K562 (cell line): ENCODE measurements at regions of chr6 and their contacts with region 1.

Region 1: GRCh38 chr6:10429638-10430427 is 15.0 kb upstream of the TFAP2A start:
- DNase-seq: peak; percentile 46 to 77 (median 59)
- ATAC-seq: peak; percentile 91
- H3K4me3 ChIP-seq: peak overlapping the region; percentile 4; the same call in 1 of the 2 replicates
- H3K27ac ChIP-seq: no peak overlapping the region; the same call in 2 of the 3 replicates
- H3K4me1 ChIP-seq: peaks cover 8 to 9% of the 10 kb centered on the region in 2 experiments; a peak in 4 of 5 replicates
- H3K27me3 ChIP-seq: peaks cover 0 to 9% of the 10 kb centered on the region in 2 experiments; a peak in 2 of 5 replicates
- CTCF ChIP-seq: peak; percentile 65 to 89 (median 79)
- EP300 ChIP-seq: peak; percentile 42; the same call in 1 of the 2 replicates
- POLR2A ChIP-seq: no peak
- RAD21 ChIP-seq: peak; percentile 98

Region 2: GRCh38 chr6:8435160-8435852 is 1994.5 kb before region 1 on chr6 and contains the start of gene SLC35B3:
- CTCF ChIA-PET with region 1: no interaction called
- POLR2A ChIA-PET with region 1: no interaction called
- in situ Hi-C with region 1: loop called (anchors 25 kb)
- intact Hi-C with region 1: loop called (anchors 10 kb)
- DNase-seq: peak; percentile 97 to 98 (median 98)
- ATAC-seq: peak; percentile 96
- H3K4me3 ChIP-seq: peak within 1 kb of the TSS; percentile 90
- H3K27ac ChIP-seq: peak within 1 kb of the TSS; percentile 91
- H3K4me1 ChIP-seq: peaks cover 5 to 9% of the 10 kb centered on the region in 2 experiments
- H3K27me3 ChIP-seq: no peaks in the 10 kb centered on the region
- CTCF ChIP-seq: no peak
- EP300 ChIP-seq: 0 out of 2 replicates have a peak, but pooled peaks have one; percentile 25
- POLR2A ChIP-seq: peak; percentile 96
- RAD21 ChIP-seq: no peak
- polyA plus RNA-seq, gene SLC35B3: 7.6 to 7.8 TPM

Region 3: DNA sequence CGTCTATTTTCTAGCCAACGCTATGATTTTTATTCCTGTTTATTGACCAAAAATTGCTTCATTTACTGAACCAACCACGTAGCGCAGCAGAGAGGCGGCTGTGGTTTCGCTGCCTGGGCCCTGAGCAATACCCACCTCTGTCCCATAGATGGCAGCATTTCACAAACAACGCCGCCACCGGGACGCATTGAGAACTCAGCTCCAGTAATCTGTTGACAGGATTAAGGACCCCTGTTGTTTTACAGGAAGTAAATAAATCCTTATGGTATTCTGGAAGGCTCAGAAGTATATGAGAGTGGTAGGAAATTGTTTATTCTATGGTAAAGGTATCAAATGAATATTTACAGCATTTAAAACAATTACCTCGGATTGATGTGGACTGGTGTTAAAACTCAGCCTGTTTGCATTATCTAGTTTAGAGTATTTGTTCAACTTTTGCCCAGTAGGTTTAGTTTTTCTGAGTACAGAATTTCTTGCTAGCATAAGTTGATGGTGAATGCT is 1446.6 kb before region 1 on chr6:
- CTCF ChIA-PET with region 1: interaction called, 12 read pairs
- POLR2A ChIA-PET with region 1: no interaction called
- in situ Hi-C with region 1: loop called (anchors 5 kb)
- intact Hi-C with region 1: loop called (anchors 1 kb)
- DNase-seq: peak; percentile 68 to 80 (median 73)
- ATAC-seq: peak; percentile 98
- H3K4me3 ChIP-seq: no peak overlapping the region
- H3K27ac ChIP-seq: no peak overlapping the region
- H3K4me1 ChIP-seq: no peaks in the 10 kb centered on the region
- H3K27me3 ChIP-seq: no peaks in the 10 kb centered on the region
- CTCF ChIP-seq: peak; percentile 94 to 97 (median 96)
- EP300 ChIP-seq: no peak
- POLR2A ChIP-seq: no peak
- RAD21 ChIP-seq: peak; percentile 85 to 87

Region 4: DNA sequence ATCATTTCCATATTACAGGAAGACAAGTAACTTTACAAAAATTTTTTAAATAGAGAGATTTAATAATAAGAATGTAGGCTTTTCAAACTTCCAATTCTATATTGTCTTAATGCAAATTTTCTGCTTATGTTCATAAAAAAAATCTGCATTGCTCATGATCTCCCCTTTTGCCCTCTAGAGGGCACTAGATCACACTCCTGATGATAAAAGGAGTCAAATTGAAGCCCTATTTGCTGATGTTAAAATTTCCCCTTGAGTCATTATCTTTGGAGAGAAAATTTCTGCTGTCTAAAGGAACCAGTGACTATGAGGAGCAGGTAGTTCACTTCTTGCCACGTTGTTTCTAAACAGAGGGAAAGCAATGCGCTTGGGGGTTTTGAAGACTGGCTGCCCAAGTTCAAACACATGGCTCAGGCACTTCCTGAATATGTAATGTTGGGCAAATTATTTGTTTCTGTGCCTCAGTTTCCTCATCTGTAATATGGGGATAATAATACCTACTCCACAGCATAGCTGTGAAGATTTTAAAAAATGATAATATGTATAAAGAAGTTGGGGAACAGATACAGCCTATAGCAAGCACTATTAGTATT is 889.2 kb before region 1 on chr6:
- CTCF ChIA-PET with region 1: no interaction called
- POLR2A ChIA-PET with region 1: no interaction called
- in situ Hi-C with region 1: loop called (anchors 10 kb)
- intact Hi-C with region 1: loop called (anchors 2 kb)
- DNase-seq: peak; percentile 35 to 49 (median 43)
- ATAC-seq: peak; percentile 49; the same call in 2 of the 3 replicates
- H3K4me3 ChIP-seq: no peak overlapping the region
- H3K27ac ChIP-seq: no peak overlapping the region
- H3K4me1 ChIP-seq: no peaks in the 10 kb centered on the region
- H3K27me3 ChIP-seq: no peaks in the 10 kb centered on the region
- CTCF ChIP-seq: peak in 2 of 3 experiments; percentile 46 to 57; a peak in 4 of 6 replicates
- EP300 ChIP-seq: no peak
- POLR2A ChIP-seq: no peak
- RAD21 ChIP-seq: peak; percentile 50 to 59

Region 5: DNA sequence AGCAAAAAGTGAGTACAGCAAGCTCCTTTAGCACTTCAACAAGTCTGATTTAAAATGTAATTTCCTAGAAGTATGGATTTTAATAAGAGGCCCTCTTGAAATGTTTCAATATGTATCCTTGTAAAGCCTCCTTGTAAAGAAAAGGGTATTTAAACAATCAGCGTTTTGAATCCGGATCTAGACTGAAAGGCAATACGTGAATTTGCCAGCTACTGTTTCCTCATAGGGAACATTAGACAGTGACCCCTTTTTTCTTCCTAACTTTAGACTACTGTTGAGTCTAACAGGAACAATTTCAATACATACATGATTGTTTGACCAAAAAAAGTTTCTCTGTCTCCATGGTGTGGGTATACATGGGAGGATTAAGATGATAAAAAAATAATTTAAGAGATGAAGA is 410.0 kb before region 1 on chr6:
- CTCF ChIA-PET with region 1: no interaction called
- POLR2A ChIA-PET with region 1: no interaction called
- in situ Hi-C with region 1: loop called (anchors 10 kb)
- intact Hi-C with region 1: no loop called
- DNase-seq: no peak
- ATAC-seq: no peak
- H3K4me3 ChIP-seq: no peak overlapping the region
- H3K27ac ChIP-seq: no peak overlapping the region
- H3K4me1 ChIP-seq: no peaks in the 10 kb centered on the region
- H3K27me3 ChIP-seq: no peaks in the 10 kb centered on the region
- CTCF ChIP-seq: no peak
- EP300 ChIP-seq: no peak
- POLR2A ChIP-seq: no peak
- RAD21 ChIP-seq: no peak

Region 6: DNA sequence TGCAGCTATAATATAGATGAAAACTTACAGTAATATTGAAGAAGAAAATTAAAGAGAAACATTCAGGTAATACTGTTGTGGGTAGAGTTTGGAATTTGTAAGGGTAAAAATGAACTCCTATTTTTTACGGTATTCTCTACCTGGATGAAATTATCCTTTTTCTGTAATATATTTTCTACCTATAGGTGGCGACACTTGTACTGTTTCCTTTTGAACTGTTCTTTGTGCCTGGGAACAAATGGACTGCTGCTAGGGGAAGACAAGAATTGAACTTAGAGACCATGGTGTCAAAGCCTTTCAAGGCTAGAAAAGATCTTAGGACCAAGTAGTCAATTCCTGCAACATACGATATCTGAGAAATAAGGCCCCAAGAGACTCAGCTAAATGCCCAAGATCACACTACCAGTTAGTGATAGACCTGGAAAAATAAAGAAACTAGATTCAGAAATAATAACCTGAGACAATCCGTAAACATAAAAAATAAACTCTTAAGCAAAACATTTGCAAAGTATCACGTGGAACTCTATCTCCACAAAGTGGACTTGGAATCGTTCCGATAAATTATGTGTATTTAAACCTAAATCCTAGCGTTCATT is 398.8 kb before region 1 on chr6:
- CTCF ChIA-PET with region 1: no interaction called
- POLR2A ChIA-PET with region 1: no interaction called
- in situ Hi-C with region 1: loop called (anchors 10 kb)
- intact Hi-C with region 1: loop called (anchors 5 kb)
- DNase-seq: peak; percentile 19 to 44 (median 36)
- ATAC-seq: peak; percentile 79
- H3K4me3 ChIP-seq: no peak overlapping the region
- H3K27ac ChIP-seq: no peak overlapping the region
- H3K4me1 ChIP-seq: no peaks in the 10 kb centered on the region
- H3K27me3 ChIP-seq: no peaks in the 10 kb centered on the region
- CTCF ChIP-seq: peak; percentile 34 to 72 (median 56); a peak in 4 of 6 replicates
- EP300 ChIP-seq: no peak
- POLR2A ChIP-seq: no peak
- RAD21 ChIP-seq: peak; percentile 61 to 67

Region 7: DNA sequence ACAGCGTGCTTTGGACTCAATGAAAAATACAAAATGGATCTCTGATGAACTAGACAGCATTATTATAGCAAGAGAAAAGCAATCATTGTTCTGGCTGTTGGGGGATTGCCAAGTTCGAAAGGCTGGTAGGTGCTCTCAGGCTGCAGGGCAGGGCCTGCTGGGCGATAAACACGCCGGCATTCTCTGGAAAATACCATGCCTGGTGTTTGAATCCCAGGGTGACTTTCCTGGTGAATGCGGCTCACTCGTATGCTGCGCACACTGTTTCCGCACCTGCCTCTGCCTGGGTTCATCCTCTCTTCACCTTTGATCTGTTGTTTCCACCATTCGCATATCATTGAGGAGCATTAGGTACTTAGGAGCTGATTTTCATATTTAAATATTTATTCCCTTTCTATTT is 128.7 kb after region 1 on chr6:
- CTCF ChIA-PET with region 1: no interaction called
- POLR2A ChIA-PET with region 1: no interaction called
- in situ Hi-C with region 1: no loop called
- intact Hi-C with region 1: no loop called
- DNase-seq: no peak
- ATAC-seq: no peak
- H3K4me3 ChIP-seq: no peak overlapping the region
- H3K27ac ChIP-seq: no peak overlapping the region
- H3K4me1 ChIP-seq: no peaks in the 10 kb centered on the region
- H3K27me3 ChIP-seq: peaks cover 36 to 54% of the 10 kb centered on the region in 2 experiments
- CTCF ChIP-seq: no peak
- EP300 ChIP-seq: no peak
- POLR2A ChIP-seq: no peak
- RAD21 ChIP-seq: no peak